Astrocyte of the cerebellum (primary cell): ENCODE measurements at regions of chr12 and their contacts with region 1.

Region 1: DNA sequence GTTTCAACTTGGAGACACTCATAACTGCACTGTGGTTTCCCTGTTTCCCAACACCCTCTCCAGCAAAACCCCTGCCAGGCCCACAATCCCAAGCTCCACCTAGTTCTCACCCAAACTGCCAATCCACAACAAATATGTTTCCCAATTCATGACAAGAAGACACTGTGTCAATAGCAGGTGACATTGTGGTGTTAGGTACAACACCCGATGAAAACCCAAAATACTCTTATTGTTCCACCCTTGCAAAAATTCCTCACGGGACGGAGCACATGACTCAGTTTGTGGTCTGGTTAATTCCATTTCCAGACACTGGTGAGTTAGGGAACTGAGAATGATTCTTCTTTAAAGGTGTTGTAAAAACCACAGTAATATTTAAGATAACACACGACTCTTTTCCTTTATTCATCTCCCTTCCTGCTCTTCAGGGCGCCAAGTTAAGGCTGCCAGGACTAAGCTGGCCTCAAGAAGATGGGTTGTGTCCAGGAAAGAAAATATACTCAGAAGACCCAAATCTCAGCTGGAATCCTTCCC is 735.5 kb downstream of the MED13L start:
- DNase-seq: peak; percentile 27
- H3K4me3 ChIP-seq: no peak overlapping the region
- CTCF ChIP-seq: no peak

Region 2: GRCh38 chr12:115468087-115468510 is 73.9 kb before region 1 on chr12:
- in situ Hi-C with region 1: no loop called
- DNase-seq: no peak
- H3K4me3 ChIP-seq: no peak overlapping the region
- CTCF ChIP-seq: peak; percentile 36

Region 3: GRCh38 chr12:115574826-115575225 is 32.9 kb after region 1 on chr12:
- in situ Hi-C with region 1: loop called (anchors 5 kb)
- DNase-seq: no peak
- H3K4me3 ChIP-seq: no peak overlapping the region
- CTCF ChIP-seq: no peak

Region 4: GRCh38 chr12:115588131-115588530 is 46.2 kb after region 1 on chr12:
- in situ Hi-C with region 1: no loop called
- DNase-seq: no peak
- H3K4me3 ChIP-seq: no peak overlapping the region
- CTCF ChIP-seq: no peak

Region 5: GRCh38 chr12:115611477-115611876 is 69.5 kb after region 1 on chr12:
- in situ Hi-C with region 1: loop called (anchors 5 kb)
- DNase-seq: no peak
- H3K4me3 ChIP-seq: no peak overlapping the region
- CTCF ChIP-seq: no peak

Region 6: DNA sequence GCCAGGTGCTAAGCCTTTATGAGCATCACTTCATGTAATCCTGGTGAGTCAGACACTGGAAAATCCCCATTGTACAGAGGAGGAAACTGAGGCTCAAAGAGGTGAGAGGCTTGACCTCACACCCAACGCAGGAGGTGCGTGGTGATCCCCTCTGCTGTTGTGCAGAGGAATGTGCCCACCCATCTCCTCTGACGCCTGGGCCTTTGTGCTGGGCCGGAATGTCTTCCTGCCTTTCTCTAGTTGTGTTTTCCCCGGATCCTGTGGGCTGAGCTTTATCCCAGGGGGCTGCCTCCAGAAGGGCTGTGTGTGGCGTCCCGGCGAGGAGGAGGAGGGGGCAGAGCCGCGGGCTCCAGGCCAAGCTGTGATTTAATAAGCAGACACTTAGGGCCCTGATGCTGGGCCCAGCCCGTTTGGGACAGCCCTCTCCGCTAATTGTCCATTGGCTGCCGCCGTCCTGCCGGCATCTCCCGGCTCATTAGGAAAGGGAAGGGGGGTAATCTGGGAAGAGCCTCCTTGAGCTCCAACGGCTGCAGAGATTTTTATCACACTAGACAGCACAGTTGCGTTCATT is 81.9 kb after region 1 on chr12:
- in situ Hi-C with region 1: no loop called
- DNase-seq: no peak
- H3K4me3 ChIP-seq: no peak overlapping the region
- CTCF ChIP-seq: no peak